Activated CD4-positive, alpha-beta T cell treated with anti-CD3 and anti-CD28 coated beads for 36 hours (primary cell): ENCODE measurements at regions of chr19 and their contacts with region 1.

Region 1: GRCh38 chr19:4968462-4969291 is at the start of gene KDM4B:
- DNase-seq: peak; percentile 100
- ATAC-seq: peak; percentile 96
- H3K4me3 Mint-ChIP-seq: peak within 1 kb of the TSS; percentile 91
- H3K27ac Mint-ChIP-seq: peak within 1 kb of the TSS; percentile 90
- H3K4me1 Mint-ChIP-seq: peaks cover 30% of the 10 kb centered on the region
- H3K27me3 Mint-ChIP-seq: no peaks in the 10 kb centered on the region
- total RNA-seq, gene KDM4B: 33.9 to 35.8 TPM

Region 2: DNA sequence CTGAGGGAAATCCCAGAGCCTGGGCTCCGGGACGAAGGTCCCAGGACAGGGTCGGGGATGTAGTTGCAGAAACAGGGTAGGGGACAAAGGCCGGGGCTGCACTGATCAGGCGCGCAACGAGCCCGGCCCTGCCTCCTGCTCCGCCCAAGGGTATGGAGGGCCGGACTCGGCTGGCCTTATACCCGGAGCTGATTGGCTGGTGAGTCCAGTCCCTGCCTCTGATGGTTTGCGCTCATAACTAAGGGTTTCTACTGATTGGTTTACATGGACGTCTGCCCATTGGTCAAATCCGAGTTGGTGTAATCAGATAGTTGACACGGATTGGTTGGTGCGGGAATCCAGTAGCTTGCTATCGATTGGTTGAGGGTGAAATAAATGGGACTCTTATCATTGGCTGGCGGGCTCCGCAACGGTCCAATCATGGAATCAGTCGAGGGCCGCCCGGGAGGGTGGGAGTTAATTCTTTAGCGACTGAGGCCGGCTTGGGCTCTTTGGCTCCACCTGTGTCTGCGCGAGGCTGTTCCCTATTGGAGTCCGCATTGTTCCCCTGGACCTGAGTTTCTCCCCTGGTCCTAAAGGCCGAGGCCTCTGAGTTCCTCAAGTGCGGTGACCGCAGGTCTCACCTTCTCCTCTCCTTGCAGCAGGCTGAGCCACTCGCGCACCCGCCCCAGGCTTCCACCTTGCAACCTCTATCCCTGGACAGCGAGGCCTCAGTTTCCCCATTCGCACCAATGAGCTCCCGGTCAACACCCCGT is 625.9 kb before region 1 on chr19:
- CTCF ChIA-PET with region 1: no interaction called
- POLR2A ChIA-PET with region 1: no interaction called
- intact Hi-C with region 1: loop called in 1 of 2 experiments (anchors 2 kb)
- DNase-seq: peak; percentile 97
- ATAC-seq: peak; percentile 91
- H3K4me3 Mint-ChIP-seq: peak overlapping the region; percentile 89
- H3K27ac Mint-ChIP-seq: peak overlapping the region; percentile 93
- H3K4me1 Mint-ChIP-seq: peaks cover 17% of the 10 kb centered on the region
- H3K27me3 Mint-ChIP-seq: no peaks in the 10 kb centered on the region

Region 3: DNA sequence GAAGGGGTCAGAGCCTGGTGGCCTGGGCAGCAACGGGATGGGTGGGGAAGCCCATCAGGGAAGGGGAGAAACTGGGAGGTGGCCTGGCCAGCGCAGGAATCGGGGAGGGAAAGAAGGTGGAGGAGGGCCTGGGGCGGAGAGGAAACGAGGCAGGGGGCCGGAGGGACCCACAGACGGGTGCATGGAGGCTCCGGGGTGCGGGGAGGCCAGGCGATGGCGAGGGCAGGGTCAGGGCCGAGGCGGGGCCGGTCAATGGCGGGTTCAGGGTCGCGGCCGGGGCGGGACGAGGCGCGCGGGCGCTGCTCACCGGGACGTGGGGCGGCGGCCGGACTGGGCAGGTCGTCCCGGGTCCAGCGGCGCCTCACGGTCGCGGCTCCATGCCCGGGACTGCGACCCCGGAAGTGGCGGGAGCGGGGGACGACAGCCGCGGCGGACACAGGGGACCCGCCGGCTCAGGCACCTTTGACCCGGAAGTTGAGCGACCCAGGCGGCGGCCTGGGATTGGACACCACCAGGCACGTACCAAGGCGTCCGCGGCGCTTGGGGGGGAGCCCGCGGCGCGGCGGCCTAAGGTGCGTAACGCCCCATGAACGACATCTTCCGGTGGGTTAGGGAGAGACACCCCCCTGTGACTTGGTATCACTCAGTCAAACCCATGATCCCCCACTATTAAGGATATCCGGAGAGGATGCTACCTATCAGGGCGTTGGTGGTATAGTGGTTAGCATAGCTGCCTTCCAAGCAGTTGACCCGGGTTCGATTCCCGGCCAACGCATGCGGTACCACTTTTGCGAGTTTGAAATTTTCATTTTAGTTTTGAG is 245.1 kb before region 1 on chr19 and contains the start of gene DPP9:
- CTCF ChIA-PET with region 1: no interaction called
- POLR2A ChIA-PET with region 1: no interaction called
- intact Hi-C with region 1: loop called (anchors 1 to 5 kb)
- DNase-seq: peak; percentile 98
- ATAC-seq: peak; percentile 95
- H3K4me3 Mint-ChIP-seq: peak within 1 kb of the TSS; percentile 92
- H3K27ac Mint-ChIP-seq: peak within 1 kb of the TSS; percentile 93
- H3K4me1 Mint-ChIP-seq: peaks cover 26% of the 10 kb centered on the region
- H3K27me3 Mint-ChIP-seq: no peaks in the 10 kb centered on the region
- total RNA-seq, gene DPP9: 49.2 to 51.3 TPM

Region 4: GRCh38 chr19:4867534-4868285 is 101.0 kb before region 1 on chr19 and contains the start of gene PLIN3:
- CTCF ChIA-PET with region 1: interaction called, 4 read pairs
- POLR2A ChIA-PET with region 1: interaction called, 4 read pairs
- intact Hi-C with region 1: loop called in 1 of 2 experiments (anchors 1 kb)
- DNase-seq: peak; percentile 98
- ATAC-seq: peak; percentile 95
- H3K4me3 Mint-ChIP-seq: peak within 1 kb of the TSS; percentile 73
- H3K27ac Mint-ChIP-seq: peak within 1 kb of the TSS; percentile 63
- H3K4me1 Mint-ChIP-seq: peaks cover 20% of the 10 kb centered on the region
- H3K27me3 Mint-ChIP-seq: peaks cover 2% of the 10 kb centered on the region
- total RNA-seq, gene PLIN3: 26.9 to 27.5 TPM

Region 5: GRCh38 chr19:5031231-5032100 is 62.8 kb after region 1 on chr19:
- CTCF ChIA-PET with region 1: interaction called, 7 read pairs
- POLR2A ChIA-PET with region 1: no interaction called
- intact Hi-C with region 1: loop called in 1 of 2 experiments (anchors 2 kb)
- DNase-seq: peak; percentile 89
- ATAC-seq: peak; percentile 94
- H3K4me3 Mint-ChIP-seq: no peak overlapping the region
- H3K27ac Mint-ChIP-seq: no peak overlapping the region
- H3K4me1 Mint-ChIP-seq: peaks cover 8% of the 10 kb centered on the region
- H3K27me3 Mint-ChIP-seq: no peaks in the 10 kb centered on the region

Region 6: GRCh38 chr19:5680437-5681368 is 712.0 kb after region 1 on chr19 and contains the starts of genes HSD11B1L and MICOS13:
- CTCF ChIA-PET with region 1: no interaction called
- POLR2A ChIA-PET with region 1: no interaction called
- intact Hi-C with region 1: loop called in 1 of 2 experiments (anchors 1 kb)
- DNase-seq: peak; percentile 99
- ATAC-seq: peak; percentile 97
- H3K4me3 Mint-ChIP-seq: peak within 1 kb of the TSS; percentile 99
- H3K27ac Mint-ChIP-seq: peak within 1 kb of the TSS; percentile 94
- H3K4me1 Mint-ChIP-seq: peaks cover 20% of the 10 kb centered on the region
- H3K27me3 Mint-ChIP-seq: no peaks in the 10 kb centered on the region
- total RNA-seq, gene HSD11B1L: 2.0 to 3.2 TPM
- total RNA-seq, gene MICOS13: 50.9 to 52.1 TPM

Region 7: DNA sequence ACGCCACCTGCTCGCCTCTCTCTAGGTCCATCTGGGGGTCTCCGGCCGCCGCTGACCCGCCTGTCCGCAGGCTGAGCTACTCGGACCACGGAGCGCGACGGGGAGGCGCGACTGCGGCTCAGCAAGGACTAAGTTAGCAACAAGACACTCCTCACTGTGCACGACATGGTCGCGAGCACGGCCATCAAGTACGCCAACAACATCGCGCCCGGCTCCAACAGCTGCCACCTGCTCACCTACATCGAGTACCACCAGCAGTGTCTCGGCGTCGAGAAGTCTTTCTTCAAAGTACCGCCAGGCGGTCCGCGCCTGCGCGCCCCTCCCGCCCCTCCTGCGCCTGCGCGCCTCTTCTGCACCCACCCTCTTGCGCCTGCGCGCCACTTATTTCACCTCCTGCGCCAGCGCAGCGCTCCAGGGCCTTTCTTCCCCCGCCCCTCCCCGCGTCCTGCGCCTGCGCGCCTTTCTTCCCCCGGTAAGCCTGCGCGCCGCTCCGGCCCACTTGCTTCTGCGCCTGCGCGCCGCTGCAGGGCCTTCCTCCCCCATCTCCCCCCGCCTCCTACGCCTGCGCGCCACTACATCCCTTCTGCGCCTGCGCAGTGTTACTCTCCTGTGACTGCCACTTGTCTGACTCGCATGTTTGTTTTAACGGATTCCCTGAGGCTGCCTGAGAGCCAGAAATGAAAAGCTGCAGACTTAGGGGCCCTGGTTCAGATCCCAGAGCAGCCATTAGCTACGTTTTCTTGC is 1230.7 kb after region 1 on chr19:
- CTCF ChIA-PET with region 1: no interaction called
- POLR2A ChIA-PET with region 1: no interaction called
- intact Hi-C with region 1: loop called in 1 of 2 experiments (anchors 2 kb)
- DNase-seq: peak; percentile 100
- ATAC-seq: peak; percentile 95
- H3K4me3 Mint-ChIP-seq: peak overlapping the region; percentile 100
- H3K27ac Mint-ChIP-seq: peak overlapping the region; percentile 92
- H3K4me1 Mint-ChIP-seq: peaks cover 12% of the 10 kb centered on the region
- H3K27me3 Mint-ChIP-seq: no peaks in the 10 kb centered on the region